ENCODE measurements at regions of chr9 and their contacts with region 1.

Region 1: GRCh38 chr9:133701862-133702797 is 36.0 kb downstream of the SARDH start:
- DNase-seq: peak; percentile 88
- H3K4me3 Mint-ChIP-seq: peak overlapping the region; percentile 88
- H3K27ac Mint-ChIP-seq: peak overlapping the region; percentile 98
- H3K4me1 Mint-ChIP-seq: peaks cover 46% of the 10 kb centered on the region
- H3K27me3 Mint-ChIP-seq: no peaks in the 10 kb centered on the region

Region 2: GRCh38 chr9:133589454-133590227 is 112.5 kb before region 1 on chr9:
- CTCF ChIA-PET with region 1: interaction called, 3 read pairs
- intact Hi-C with region 1: loop called (anchors 10 kb)
- DNase-seq: peak; percentile 63
- H3K4me3 Mint-ChIP-seq: no peak overlapping the region
- H3K27ac Mint-ChIP-seq: no peak overlapping the region
- H3K4me1 Mint-ChIP-seq: peaks cover 6% of the 10 kb centered on the region
- H3K27me3 Mint-ChIP-seq: peaks cover 9% of the 10 kb centered on the region

Region 3: GRCh38 chr9:133658442-133659431 is 43.4 kb before region 1 on chr9:
- CTCF ChIA-PET with region 1: no interaction called
- intact Hi-C with region 1: loop called (anchors 2 kb)
- DNase-seq: peak; percentile 60
- H3K4me3 Mint-ChIP-seq: peak overlapping the region; percentile 45
- H3K27ac Mint-ChIP-seq: no peak overlapping the region
- H3K4me1 Mint-ChIP-seq: peaks cover 41% of the 10 kb centered on the region
- H3K27me3 Mint-ChIP-seq: peaks cover 18% of the 10 kb centered on the region

Region 4: DNA sequence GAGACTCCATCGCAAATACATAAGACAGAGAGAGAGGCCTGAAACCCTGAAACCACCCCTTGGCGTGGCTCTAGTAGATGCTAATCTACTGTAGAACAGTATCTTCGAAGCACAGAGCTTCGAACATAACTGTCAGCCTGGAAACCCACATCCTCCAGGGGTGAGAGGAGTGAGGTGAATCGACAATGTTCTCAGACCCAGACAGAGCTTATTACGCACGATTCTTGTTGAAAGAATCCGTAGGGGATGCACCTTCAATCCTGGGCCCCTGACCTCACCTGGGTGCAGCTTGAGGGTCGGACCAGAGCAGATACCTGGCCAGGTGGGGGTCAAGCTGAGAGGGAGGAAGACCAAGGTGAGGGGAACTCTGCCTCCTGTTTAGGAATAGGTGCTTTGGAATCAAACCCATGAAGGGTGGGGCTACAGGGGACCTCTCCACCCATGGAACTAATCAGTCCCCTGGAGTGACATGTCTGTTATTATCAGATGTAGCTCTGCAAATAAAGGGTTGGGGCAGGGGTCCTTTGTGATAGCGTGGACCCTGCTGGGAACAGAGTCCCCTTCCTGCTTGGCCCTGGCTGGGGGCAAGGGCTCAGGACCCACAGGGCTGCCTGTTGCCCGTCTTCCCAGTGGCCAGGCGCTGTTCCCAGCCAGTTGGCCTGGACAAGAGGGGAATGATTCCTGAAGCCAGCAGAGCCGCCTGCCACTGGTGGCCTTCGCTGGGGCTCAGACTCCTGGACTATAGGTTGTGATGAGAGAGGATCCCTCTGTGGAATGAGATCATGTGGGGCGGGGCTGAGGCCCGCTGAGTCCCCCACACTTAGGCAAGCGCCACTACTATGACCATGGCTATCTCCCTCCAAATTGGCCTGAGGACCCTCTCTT is 24.8 kb before region 1 on chr9:
- CTCF ChIA-PET with region 1: no interaction called
- intact Hi-C with region 1: loop called (anchors 1 kb)
- DNase-seq: peak; percentile 85
- H3K4me3 Mint-ChIP-seq: no peak overlapping the region
- H3K27ac Mint-ChIP-seq: peak overlapping the region; percentile 70
- H3K4me1 Mint-ChIP-seq: peaks cover 44% of the 10 kb centered on the region
- H3K27me3 Mint-ChIP-seq: no peaks in the 10 kb centered on the region

Region 5: GRCh38 chr9:133683586-133684120 is 18.5 kb before region 1 on chr9:
- CTCF ChIA-PET with region 1: interaction called, 6 read pairs
- intact Hi-C with region 1: loop called (anchors 1 kb)
- DNase-seq: peak; percentile 86
- H3K4me3 Mint-ChIP-seq: peak overlapping the region; percentile 77
- H3K27ac Mint-ChIP-seq: peak overlapping the region; percentile 96
- H3K4me1 Mint-ChIP-seq: peaks cover 26% of the 10 kb centered on the region
- H3K27me3 Mint-ChIP-seq: no peaks in the 10 kb centered on the region

Region 6: GRCh38 chr9:133742849-133743444 is 40.8 kb after region 1 on chr9:
- CTCF ChIA-PET with region 1: interaction called, 15 read pairs
- intact Hi-C with region 1: no loop called
- DNase-seq: peak; percentile 83
- H3K4me3 Mint-ChIP-seq: no peak overlapping the region
- H3K27ac Mint-ChIP-seq: no peak overlapping the region
- H3K4me1 Mint-ChIP-seq: peaks cover 2% of the 10 kb centered on the region
- H3K27me3 Mint-ChIP-seq: peaks cover 2% of the 10 kb centered on the region

Region 7: DNA sequence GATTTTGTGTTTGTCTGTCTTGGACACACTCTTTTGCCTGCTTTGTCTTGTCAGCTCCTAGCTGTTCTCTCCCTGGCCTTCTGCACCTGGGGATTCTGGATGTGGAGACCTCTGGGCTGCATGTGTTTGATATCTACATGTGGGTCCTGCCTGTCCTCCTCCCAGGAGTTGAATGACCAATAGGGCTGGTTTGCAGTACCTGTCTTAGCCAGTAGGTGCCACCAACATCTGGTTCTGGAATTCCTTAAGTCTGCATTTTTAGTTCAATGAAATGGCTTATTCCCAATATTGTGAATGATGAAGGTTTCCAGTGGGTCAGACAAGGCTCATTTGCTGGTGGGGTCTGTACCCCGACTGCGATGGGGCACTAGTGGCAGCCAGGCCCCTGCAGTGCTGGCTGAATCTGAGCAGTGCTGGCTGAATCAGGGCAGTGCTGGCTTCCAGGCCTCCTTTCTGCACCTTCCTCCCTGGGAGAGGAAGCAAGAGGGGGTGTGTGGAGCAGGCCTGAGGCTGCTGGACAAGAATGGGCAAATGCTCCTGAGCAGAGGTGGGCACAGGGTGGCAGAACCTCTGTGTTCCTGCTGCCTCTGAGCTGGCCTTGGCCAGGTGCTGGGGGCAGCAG is 697.4 kb after region 1 on chr9:
- CTCF ChIA-PET with region 1: no interaction called
- intact Hi-C with region 1: loop called (anchors 10 kb)
- DNase-seq: peak; percentile 34
- H3K4me3 Mint-ChIP-seq: no peak overlapping the region
- H3K27ac Mint-ChIP-seq: no peak overlapping the region
- H3K4me1 Mint-ChIP-seq: peaks cover 34% of the 10 kb centered on the region
- H3K27me3 Mint-ChIP-seq: no peaks in the 10 kb centered on the region

Measured in activated naive CD4-positive, alpha-beta T cell treated with anti-CD3 and anti-CD28 coated beads for 36 hours (primary cell).